CD4-positive, alpha-beta memory T cell (primary cell): ENCODE measurements at regions of chr20 and their contacts with region 1.

Region 1: DNA sequence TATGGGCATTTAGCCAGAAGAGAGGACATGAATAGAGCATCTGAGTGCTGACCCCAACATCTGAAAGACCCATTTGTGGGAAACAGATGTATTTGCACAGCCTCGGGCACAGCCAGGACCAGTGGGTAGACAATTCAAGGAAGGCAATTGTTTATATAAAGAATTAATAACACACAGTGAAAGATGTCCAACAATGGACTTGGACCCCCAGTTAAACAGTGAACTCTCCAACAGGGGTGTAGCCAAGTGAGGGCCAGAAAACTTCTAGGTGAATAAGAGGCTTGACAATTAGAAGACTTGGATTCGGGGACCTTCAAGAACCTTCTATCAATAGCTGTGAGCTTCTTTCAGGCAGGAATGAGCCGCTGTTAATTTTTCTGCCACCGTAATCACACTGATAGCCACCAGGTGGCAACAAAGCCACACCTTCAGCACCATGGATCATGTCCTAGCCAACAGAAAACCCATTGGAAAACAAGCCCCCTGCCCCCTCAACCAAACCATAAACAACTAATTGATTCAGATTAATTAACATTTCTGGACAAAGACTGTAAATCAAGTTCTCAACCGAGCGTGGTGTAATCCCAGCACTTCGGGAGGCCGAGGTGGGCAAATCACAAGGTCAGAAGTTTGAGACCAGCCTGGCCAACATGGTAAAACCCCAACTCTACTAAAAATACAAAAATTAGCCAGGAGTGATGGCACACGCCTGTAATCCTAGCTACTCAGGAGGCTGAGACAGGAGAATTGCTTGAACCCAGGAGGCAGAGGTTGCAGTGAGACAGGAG is 8.8 kb upstream of the SRSF6 start:
- DNase-seq: peak in 4 of 5 donors; percentile 28 to 41 (median 34)
- H3K4me3 ChIP-seq: no peak overlapping the region
- H3K4me3 Mint-ChIP-seq: no peak overlapping the region
- H3K27ac ChIP-seq: no peak overlapping the region
- H3K27ac Mint-ChIP-seq: no peak overlapping the region
- H3K4me1 ChIP-seq: no peaks in the 10 kb centered on the region
- H3K4me1 Mint-ChIP-seq: peaks cover 0 to 6% (median 5%) of the 10 kb centered on the region in 4 donors
- H3K27me3 ChIP-seq: no peaks in the 10 kb centered on the region
- H3K27me3 Mint-ChIP-seq: peaks cover 11 to 33% of the 10 kb centered on the region in 2 donors

Region 2: DNA sequence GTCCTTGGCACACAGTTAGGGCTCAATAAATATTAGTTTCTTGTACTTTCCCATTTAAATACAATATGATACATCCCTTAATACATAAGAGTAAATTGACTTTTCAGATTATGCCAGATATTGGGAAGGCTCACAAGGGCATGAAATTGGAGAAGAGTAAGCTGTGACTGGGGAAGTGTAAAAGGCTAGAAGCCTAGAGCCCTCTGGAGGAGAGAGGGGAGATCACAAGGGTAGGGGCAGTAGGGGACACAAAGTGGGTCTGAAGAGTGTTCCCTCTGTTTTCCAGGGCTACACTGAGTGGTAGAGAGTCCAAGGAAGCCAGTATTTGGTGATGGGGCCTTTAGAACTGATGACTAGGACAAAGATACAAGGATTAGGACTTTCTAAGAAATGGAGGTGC is 1267.9 kb before region 1 on chr20:
- CTCF ChIA-PET with region 1: no interaction called
- POLR2A ChIA-PET with region 1: no interaction called
- intact Hi-C with region 1: no loop called
- DNase-seq: no peak
- H3K4me3 ChIP-seq: no peak overlapping the region
- H3K4me3 Mint-ChIP-seq: no peak overlapping the region
- H3K27ac ChIP-seq: no peak overlapping the region
- H3K27ac Mint-ChIP-seq: no peak overlapping the region
- H3K4me1 ChIP-seq: no peaks in the 10 kb centered on the region
- H3K4me1 Mint-ChIP-seq: no peaks in the 10 kb centered on the region
- H3K27me3 ChIP-seq: no peaks in the 10 kb centered on the region
- H3K27me3 Mint-ChIP-seq: no peaks in the 10 kb centered on the region

Region 3: DNA sequence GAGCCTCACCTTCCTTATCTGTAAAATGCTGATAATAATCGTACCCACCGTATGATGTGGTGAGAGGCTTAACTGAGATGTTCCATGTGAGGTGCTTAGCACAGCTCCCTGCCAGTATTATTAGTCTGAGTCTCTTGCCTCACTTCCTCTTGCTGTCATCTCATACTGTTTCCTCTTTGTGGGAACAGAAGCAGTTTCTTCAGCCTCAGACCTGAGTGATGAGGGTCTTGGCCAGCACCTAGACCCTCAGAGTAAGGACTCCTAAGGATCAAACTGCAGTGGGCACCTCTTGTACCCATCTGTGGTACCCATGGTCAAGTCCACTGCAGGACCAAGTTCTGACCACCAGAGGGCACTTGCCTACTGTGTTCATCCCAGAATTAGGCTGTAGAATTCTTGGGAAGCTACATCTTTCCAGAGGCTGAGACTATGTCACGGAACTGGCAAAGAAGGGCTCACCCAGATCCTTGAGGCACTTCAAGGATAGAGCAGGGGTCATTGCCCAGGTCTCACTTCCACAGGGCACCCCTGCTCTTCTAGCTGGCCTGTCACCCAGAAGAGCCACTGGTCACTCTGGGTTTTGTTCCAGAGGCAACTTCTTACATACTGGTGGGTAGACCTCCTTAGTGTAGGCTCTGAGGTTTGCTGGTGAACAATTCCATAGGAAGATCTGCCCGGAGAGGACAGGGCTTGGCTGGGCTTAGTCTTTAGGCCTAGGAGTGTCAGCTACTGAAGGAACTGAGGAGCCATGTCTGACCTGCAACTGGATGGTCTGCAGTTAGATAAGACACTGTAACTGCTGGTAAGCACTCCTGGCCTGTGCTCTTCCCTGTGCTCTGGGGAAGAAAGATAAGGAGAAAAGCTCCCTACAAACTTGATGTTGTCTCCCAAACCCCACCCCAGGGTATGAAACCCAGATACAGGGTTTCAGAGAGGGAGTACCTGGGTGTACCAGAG is 89.3 kb after region 1 on chr20:
- CTCF ChIA-PET with region 1: interaction called, 4 read pairs
- POLR2A ChIA-PET with region 1: no interaction called
- intact Hi-C with region 1: loop called (anchors 1 kb)
- DNase-seq: peak in 4 of 5 donors; percentile 15 to 25 (median 21)
- H3K4me3 ChIP-seq: no peak overlapping the region
- H3K4me3 Mint-ChIP-seq: no peak overlapping the region
- H3K27ac ChIP-seq: no peak overlapping the region
- H3K27ac Mint-ChIP-seq: peak overlapping the region in 2 of 7 donors; percentile 3 to 4
- H3K4me1 ChIP-seq: no peaks in the 10 kb centered on the region
- H3K4me1 Mint-ChIP-seq: peaks cover 0 to 2% (median 0%) of the 10 kb centered on the region in 4 donors
- H3K27me3 ChIP-seq: no peaks in the 10 kb centered on the region
- H3K27me3 Mint-ChIP-seq: no peaks in the 10 kb centered on the region

Region 4: DNA sequence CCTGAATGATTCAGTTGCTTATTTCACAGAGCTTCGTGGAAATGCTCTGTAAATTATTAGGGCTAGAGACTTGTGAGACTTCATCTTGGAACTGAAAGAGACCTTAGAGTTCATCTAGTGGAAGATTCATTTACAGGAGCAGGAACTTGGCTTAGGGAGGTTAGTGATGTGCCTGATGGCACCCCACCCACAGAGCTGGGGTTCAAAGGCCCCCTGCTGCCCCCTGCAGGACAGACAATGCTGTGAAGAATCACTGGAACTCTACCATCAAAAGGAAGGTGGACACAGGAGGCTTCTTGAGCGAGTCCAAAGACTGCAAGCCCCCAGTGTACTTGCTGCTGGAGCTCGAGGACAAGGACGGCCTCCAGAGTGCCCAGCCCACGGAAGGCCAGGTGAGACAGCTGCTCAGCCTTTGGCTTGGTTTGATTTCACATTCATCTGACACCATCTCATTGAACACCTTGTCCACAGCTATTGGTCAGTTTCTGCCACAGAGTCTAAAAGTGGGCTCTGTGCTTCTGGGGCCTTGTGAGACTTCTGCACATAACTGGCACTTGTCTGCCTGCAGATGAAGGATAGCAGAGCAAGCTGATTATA is 243.1 kb after region 1 on chr20:
- CTCF ChIA-PET with region 1: interaction called, 30 read pairs
- POLR2A ChIA-PET with region 1: no interaction called
- intact Hi-C with region 1: no loop called
- DNase-seq: peak in 4 of 5 donors; percentile 12 to 30 (median 20)
- H3K4me3 ChIP-seq: no peak overlapping the region
- H3K4me3 Mint-ChIP-seq: no peak overlapping the region
- H3K27ac ChIP-seq: no peak overlapping the region
- H3K27ac Mint-ChIP-seq: no peak overlapping the region
- H3K4me1 ChIP-seq: no peaks in the 10 kb centered on the region
- H3K4me1 Mint-ChIP-seq: peaks cover 0 to 2% (median 0%) of the 10 kb centered on the region in 4 donors
- H3K27me3 ChIP-seq: no peaks in the 10 kb centered on the region
- H3K27me3 Mint-ChIP-seq: no peaks in the 10 kb centered on the region

Region 5: DNA sequence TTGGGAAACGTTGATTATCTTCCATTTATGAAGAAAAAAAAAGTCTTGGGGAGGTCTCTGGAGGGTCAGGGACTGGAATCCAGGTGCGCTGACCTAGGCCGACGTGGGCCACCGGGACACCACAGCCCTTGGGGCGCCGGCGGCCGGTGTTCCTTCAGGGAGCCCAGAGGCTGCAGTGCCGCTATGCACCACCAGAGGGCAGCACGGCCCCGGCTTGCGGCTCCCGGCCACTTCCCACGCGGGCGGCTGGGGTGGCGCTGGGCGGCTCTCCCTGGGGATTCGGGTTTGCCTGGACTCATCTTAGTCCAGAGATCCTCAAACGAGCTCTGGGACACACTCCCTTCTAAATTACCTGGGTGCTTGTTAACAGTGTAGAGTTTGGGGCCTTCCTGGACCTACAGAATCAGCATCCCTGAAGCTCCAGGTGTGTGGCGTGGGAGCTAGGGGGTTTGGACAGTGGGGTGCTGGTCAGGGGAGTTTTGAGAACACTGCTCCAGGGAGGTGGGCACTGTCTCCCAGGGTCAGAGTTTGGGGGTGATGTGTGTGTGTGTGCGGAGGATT is 300.9 kb after region 1 on chr20:
- CTCF ChIA-PET with region 1: no interaction called
- POLR2A ChIA-PET with region 1: no interaction called
- intact Hi-C with region 1: loop called (anchors 2 kb)
- DNase-seq: peak; percentile 59 to 78 (median 62)
- H3K4me3 ChIP-seq: no peak overlapping the region
- H3K4me3 Mint-ChIP-seq: peak overlapping the region in 1 of 8 donors; percentile 37
- H3K27ac ChIP-seq: no peak overlapping the region
- H3K27ac Mint-ChIP-seq: peak overlapping the region in 2 of 7 donors; percentile 62 to 66
- H3K4me1 ChIP-seq: peaks cover 30% of the 10 kb centered on the region
- H3K4me1 Mint-ChIP-seq: peaks cover 19 to 31% (median 21%) of the 10 kb centered on the region in 4 donors
- H3K27me3 ChIP-seq: no peaks in the 10 kb centered on the region
- H3K27me3 Mint-ChIP-seq: peaks cover 3 to 22% of the 10 kb centered on the region in 2 donors

Region 6: GRCh38 chr20:44187051-44187762 is 738.3 kb after region 1 on chr20 and contains the start of gene JPH2:
- CTCF ChIA-PET with region 1: interaction called, 4 read pairs
- POLR2A ChIA-PET with region 1: no interaction called
- intact Hi-C with region 1: loop called (anchors 1 kb)
- DNase-seq: no peak
- H3K4me3 ChIP-seq: no peak within 1 kb of the TSS
- H3K4me3 Mint-ChIP-seq: peak within 1 kb of the TSS in 3 of 8 donors; percentile 5 to 32 (median 15)
- H3K27ac ChIP-seq: no peak within 1 kb of the TSS
- H3K27ac Mint-ChIP-seq: no peak within 1 kb of the TSS
- H3K4me1 ChIP-seq: no peaks in the 10 kb centered on the region
- H3K4me1 Mint-ChIP-seq: peaks cover 1 to 11% (median 5%) of the 10 kb centered on the region in 4 donors
- H3K27me3 ChIP-seq: peaks cover 26% of the 10 kb centered on the region
- H3K27me3 Mint-ChIP-seq: peaks cover 41 to 51% of the 10 kb centered on the region in 2 donors
- total RNA-seq, gene JPH2: not detected